ENCODE measurements at regions of chr4 and their contacts with region 1.

Region 1: DNA sequence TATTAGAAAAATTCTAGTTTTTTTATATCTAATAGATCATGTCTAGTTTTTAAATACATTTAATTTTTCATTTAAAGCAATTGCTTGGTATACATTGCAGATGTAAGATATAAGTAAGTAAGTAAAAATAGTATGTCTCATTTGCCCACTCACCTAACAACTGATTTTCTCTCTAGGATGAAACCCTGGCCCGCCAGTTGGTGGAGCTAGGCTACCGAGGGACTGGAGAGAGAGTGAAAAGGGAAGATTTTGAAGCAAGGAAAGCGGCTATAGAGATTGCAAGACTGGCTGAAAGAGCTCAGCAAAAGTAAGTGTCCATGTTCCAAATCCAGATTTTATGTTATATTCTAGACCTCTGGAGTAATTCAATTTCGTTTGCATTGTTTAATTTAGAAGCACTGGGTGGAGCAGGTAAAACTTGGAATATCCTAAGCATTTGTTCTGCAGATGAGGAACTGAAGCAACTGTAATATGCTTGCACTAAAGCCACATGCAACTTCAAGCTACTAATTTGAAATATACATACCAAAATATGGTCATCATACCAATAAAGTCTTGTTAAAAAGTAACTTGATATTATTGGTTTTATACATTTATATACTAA is 27.1 kb downstream of the CFAP299 start:
- DNase-seq: no peak
- ATAC-seq: peak in 3 of 4 donors; percentile 64 to 67 (median 66)
- H3K4me3 ChIP-seq: no peak overlapping the region
- H3K27ac ChIP-seq: no peak overlapping the region
- H3K4me1 ChIP-seq: no peaks in the 10 kb centered on the region
- H3K27me3 ChIP-seq: no peaks in the 10 kb centered on the region
- CTCF ChIP-seq: peak; percentile 12 to 60 (median 47)
- POLR2A ChIP-seq: no peak

Region 2: DNA sequence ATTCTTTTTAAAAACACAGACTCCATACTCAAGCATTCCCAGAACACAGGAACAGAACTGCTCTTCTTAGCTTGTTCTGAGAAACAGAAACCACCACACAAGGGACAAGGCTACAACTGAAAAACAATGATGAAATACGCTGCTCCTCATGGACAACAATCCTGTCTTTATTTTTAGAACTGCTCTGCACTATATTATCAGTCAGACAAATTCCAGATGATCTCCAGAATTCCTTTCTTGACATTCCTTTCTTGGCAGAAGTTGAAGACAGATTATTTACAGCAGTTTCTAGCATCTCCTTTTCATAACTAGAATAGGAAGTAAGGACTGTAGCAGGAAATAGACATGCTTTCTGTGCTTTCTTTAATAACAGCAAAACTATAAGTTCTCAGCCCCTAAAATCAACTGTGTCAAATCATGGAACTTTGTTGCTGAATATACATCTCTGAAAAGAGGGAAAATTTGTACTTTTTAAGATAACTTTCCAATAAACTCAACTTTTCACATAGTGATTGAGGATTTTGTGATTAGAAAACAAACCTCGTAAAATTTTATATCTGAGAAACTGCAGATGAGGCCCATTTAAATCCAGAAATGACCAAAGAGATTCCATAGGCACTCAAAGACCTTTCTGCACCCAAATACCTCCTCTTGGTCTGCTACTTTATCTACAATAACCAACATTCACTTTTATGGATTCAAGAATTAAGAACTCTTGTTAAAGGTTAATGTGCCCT is 325.6 kb before region 1 on chr4:
- intact Hi-C with region 1: no loop called
- DNase-seq: no peak
- ATAC-seq: peak; percentile 67 to 82 (median 78)
- H3K4me3 ChIP-seq: no peak overlapping the region
- H3K27ac ChIP-seq: peak overlapping the region in 2 of 3 donors; percentile 45 to 53
- H3K4me1 ChIP-seq: no peaks in the 10 kb centered on the region
- H3K27me3 ChIP-seq: no peaks in the 10 kb centered on the region
- CTCF ChIP-seq: no peak
- POLR2A ChIP-seq: no peak

Region 3: DNA sequence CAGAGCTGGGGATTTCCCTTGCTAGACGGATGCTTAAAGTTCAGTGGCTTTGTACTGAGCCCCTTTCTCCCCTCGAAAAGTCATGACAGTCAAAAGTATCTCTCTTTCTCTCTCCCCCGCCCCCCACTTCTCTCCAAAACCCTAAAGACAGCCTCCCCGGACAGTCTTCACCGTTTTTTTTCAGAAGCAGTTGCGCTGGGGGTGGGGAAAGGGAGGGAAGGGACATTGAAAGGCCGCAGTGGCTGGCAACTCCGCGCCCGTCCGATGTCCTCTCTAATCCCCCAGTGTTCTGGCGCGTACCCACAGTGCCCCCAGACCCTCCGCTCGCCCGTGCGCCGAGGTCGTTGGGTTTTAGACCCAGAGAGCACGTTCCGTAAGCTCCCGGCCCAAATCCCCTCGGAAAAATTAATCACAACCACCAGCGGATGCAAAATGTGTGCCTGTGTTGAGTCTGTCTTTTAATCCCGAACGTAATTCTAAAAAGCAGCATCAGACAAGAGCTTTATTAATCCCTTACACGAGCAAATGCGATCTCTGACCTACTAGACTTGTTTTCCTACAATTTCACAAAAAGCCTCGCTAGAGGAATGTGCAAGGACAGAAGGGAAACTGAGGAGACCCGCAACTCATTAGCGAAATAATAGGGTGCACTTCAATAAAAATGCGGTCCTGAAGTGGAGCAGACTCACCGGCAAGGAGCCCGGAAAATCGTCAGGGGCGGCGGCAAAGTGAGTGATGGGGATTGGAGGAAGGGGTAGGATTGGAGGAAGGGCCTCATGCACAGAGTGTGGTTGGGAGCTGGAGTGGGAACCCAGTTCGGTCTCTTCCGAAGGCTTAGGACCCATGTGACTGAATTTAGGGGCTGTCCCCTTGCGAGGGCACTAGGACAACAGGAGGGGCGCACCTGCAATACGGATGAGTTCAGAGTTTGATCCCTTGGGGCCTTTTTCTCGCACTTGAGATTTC is 177.6 kb before region 1 on chr4:
- intact Hi-C with region 1: no loop called
- DNase-seq: no peak
- ATAC-seq: no peak
- H3K4me3 ChIP-seq: peak overlapping the region; percentile 46 to 56 (median 47)
- H3K27ac ChIP-seq: no peak overlapping the region
- H3K4me1 ChIP-seq: peaks cover 0 to 24% (median 7%) of the 10 kb centered on the region in 4 donors
- H3K27me3 ChIP-seq: peaks cover 5 to 32% of the 10 kb centered on the region in 2 donors
- CTCF ChIP-seq: no peak
- POLR2A ChIP-seq: no peak

Region 4: GRCh38 chr4:80295336-80295735 is 67.3 kb before region 1 on chr4:
- intact Hi-C with region 1: no loop called
- DNase-seq: no peak
- ATAC-seq: no peak
- H3K4me3 ChIP-seq: no peak overlapping the region
- H3K27ac ChIP-seq: no peak overlapping the region
- H3K4me1 ChIP-seq: no peaks in the 10 kb centered on the region
- H3K27me3 ChIP-seq: no peaks in the 10 kb centered on the region
- CTCF ChIP-seq: no peak
- POLR2A ChIP-seq: no peak

Region 5: DNA sequence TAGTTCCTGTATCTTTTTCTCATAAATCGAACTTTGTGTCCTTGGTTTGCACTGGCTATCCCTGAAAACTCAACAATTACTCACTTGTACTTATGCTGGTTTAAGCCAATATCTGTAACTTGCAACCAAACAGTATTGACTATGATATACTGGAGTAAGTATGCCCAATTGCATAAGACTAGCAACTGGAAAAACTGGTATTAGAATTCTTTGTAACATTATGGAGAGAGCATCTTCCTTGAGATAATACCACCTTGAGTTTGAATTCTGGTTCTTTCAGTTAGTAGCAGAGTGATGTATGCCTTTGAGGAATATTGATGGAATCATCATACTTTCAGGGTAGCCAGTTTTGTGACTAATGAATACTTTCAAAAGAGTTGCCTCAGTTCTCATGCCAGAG is 695.9 kb after region 1 on chr4:
- intact Hi-C with region 1: loop called in 1 of 2 experiments (anchors 5 kb)
- DNase-seq: no peak
- ATAC-seq: no peak
- H3K4me3 ChIP-seq: no peak overlapping the region
- H3K27ac ChIP-seq: no peak overlapping the region
- H3K4me1 ChIP-seq: peaks cover 0 to 10% (median 0%) of the 10 kb centered on the region in 4 donors
- H3K27me3 ChIP-seq: no peaks in the 10 kb centered on the region
- CTCF ChIP-seq: no peak
- POLR2A ChIP-seq: no peak

Measured in right lobe of liver (tissue), 6 donors.